Mammary epithelial cell (primary cell): ENCODE measurements at regions of chr16 and their contacts with region 1.

Region 1: GRCh38 chr16:67719048-67719777 is at the start of gene GFOD2:
- DNase-seq: peak; percentile 90
- H3K4me3 ChIP-seq: peak within 1 kb of the TSS; percentile 86 to 95 (median 89)
- H3K27ac ChIP-seq: peak within 1 kb of the TSS; percentile 76
- H3K4me1 ChIP-seq: peaks cover 34% of the 10 kb centered on the region
- H3K27me3 ChIP-seq: no peaks in the 10 kb centered on the region
- CTCF ChIP-seq: no peak
- total RNA-seq, gene GFOD2: 16.6 to 17.7 TPM

Region 2: GRCh38 chr16:67672739-67673662 is 46.2 kb before region 1 on chr16:
- CTCF ChIA-PET with region 1: no interaction called
- dilution Hi-C with region 1: no loop called
- in situ Hi-C with region 1: no loop called
- intact Hi-C with region 1: loop called (anchors 5 kb)
- DNase-seq: peak; percentile 39
- H3K4me3 ChIP-seq: no peak overlapping the region
- H3K27ac ChIP-seq: no peak overlapping the region
- H3K4me1 ChIP-seq: peaks cover 9% of the 10 kb centered on the region
- H3K27me3 ChIP-seq: no peaks in the 10 kb centered on the region
- CTCF ChIP-seq: peak; percentile 79 to 83

Region 3: DNA sequence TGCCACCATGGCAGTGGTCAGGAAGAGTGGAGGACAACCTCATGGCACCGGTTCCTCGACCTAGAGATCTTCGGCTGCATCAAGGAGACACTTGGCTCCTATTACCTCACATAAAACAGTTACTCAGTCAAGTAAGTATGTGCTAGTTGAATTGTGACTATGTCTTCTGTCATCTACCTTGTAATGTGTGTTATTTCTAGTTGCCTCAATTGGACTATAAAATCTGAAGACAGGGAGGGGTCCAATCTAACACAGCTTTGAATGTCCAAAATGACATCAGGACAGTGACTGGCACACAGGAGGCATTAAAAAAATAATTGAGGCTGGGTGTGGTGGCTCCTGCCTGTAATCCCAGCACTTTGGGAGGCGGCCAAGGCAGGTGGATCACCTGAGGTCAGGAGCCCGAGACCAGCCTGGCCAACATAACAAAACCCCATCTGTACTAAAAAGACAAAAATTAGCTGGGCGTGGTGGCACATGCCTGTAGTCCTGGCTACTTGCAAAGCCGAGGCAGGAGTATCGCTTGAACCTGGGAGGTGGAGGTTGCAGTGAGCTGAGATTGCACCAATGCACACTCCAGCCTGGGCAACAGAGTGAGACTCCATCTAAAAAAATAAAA is 35.3 kb before region 1 on chr16:
- CTCF ChIA-PET with region 1: no interaction called
- dilution Hi-C with region 1: loop called (anchors 5 kb)
- in situ Hi-C with region 1: no loop called
- intact Hi-C with region 1: loop called (anchors 5 kb)
- DNase-seq: no peak
- H3K4me3 ChIP-seq: no peak overlapping the region
- H3K27ac ChIP-seq: no peak overlapping the region
- H3K4me1 ChIP-seq: no peaks in the 10 kb centered on the region
- H3K27me3 ChIP-seq: no peaks in the 10 kb centered on the region
- CTCF ChIP-seq: no peak

Region 4: GRCh38 chr16:67750466-67750865 is 31.3 kb after region 1 on chr16:
- CTCF ChIA-PET with region 1: interaction called, 4 read pairs
- dilution Hi-C with region 1: loop called (anchors 5 kb)
- in situ Hi-C with region 1: no loop called
- intact Hi-C with region 1: loop called (anchors 2 kb)
- DNase-seq: no peak
- H3K4me3 ChIP-seq: no peak overlapping the region
- H3K27ac ChIP-seq: no peak overlapping the region
- H3K4me1 ChIP-seq: peaks cover 8% of the 10 kb centered on the region
- H3K27me3 ChIP-seq: no peaks in the 10 kb centered on the region
- CTCF ChIP-seq: no peak

Region 5: DNA sequence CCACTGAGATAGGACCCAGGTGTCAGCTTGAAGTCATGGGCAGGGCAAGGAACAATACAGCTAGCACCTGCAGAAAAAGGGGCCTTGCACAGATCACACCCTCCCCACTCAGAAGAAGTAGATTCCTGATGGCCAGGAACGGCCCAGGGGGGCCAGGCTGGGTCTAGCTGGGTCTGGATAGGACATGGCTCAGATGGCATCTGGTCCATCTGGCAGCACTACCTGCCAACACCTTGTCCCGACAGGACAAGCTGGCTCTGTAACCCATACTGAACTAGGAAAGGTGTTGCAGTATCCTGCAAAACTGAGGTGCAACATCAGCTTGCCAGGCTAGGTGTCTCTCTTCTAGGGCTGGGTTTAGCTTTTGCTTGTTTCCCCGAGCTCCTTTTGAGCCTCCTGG is 38.8 kb after region 1 on chr16:
- CTCF ChIA-PET with region 1: no interaction called
- dilution Hi-C with region 1: loop called (anchors 5 kb)
- in situ Hi-C with region 1: no loop called
- intact Hi-C with region 1: no loop called
- DNase-seq: no peak
- H3K4me3 ChIP-seq: no peak overlapping the region
- H3K27ac ChIP-seq: no peak overlapping the region
- H3K4me1 ChIP-seq: peaks cover 5% of the 10 kb centered on the region
- H3K27me3 ChIP-seq: no peaks in the 10 kb centered on the region
- CTCF ChIP-seq: no peak

Region 6: DNA sequence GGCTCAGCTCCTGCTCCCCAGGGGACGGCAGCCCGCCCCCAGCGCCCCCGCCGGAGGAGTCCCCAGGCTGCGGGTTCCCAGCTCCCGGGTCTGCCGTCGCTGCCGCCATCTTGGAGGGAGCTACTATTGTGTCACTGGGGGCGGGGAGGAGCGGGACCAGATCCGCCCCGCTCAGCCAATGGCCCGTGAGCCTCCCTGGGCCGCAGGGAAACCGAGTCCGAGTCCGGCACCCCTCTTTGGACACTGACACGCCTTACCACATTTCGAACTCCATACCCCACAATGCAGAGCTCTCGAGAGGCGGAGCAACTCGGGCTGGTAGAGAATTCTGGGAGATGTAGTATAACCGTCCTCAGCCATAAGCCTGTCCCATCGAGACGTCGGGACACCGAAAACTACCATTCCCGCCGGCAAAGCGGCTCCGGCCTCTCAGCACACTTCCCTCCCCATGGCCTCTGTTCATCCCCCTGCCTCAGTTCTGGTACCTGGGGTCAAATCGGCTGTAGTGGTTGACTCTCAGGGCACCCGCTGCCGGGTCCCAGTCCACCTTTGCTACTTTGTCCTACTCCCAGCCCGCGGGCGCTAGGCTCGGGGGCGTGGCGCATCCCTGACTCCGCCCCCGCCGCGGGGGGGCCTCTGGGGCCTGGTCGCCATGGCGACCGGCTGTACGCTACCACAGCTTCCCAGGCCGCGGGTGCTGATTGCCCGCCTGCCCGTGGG is 87.4 kb after region 1 on chr16 and contains the starts of genes RANBP10 and TSNAXIP1:
- CTCF ChIA-PET with region 1: interaction called, 3 read pairs
- dilution Hi-C with region 1: no loop called
- in situ Hi-C with region 1: no loop called
- intact Hi-C with region 1: loop called (anchors 1 kb)
- DNase-seq: peak; percentile 99
- H3K4me3 ChIP-seq: peak within 1 kb of the TSS; percentile 80 to 93 (median 86)
- H3K27ac ChIP-seq: peak within 1 kb of the TSS; percentile 78
- H3K4me1 ChIP-seq: peaks cover 15% of the 10 kb centered on the region
- H3K27me3 ChIP-seq: no peaks in the 10 kb centered on the region
- CTCF ChIP-seq: no peak
- total RNA-seq, gene RANBP10: 5.5 to 15.3 TPM
- total RNA-seq, gene TSNAXIP1: 0.33 to 0.99 TPM

Region 7: GRCh38 chr16:67822511-67822910 is 103.3 kb after region 1 on chr16:
- CTCF ChIA-PET with region 1: no interaction called
- dilution Hi-C with region 1: loop called (anchors 5 kb)
- in situ Hi-C with region 1: no loop called
- intact Hi-C with region 1: no loop called
- DNase-seq: no peak
- H3K4me3 ChIP-seq: no peak overlapping the region
- H3K27ac ChIP-seq: no peak overlapping the region
- H3K4me1 ChIP-seq: no peaks in the 10 kb centered on the region
- H3K27me3 ChIP-seq: no peaks in the 10 kb centered on the region
- CTCF ChIP-seq: no peak